Lower lobe of right lung (tissue), 2 donors: ENCODE measurements at regions of chr5 and their contacts with region 1.

Region 1: DNA sequence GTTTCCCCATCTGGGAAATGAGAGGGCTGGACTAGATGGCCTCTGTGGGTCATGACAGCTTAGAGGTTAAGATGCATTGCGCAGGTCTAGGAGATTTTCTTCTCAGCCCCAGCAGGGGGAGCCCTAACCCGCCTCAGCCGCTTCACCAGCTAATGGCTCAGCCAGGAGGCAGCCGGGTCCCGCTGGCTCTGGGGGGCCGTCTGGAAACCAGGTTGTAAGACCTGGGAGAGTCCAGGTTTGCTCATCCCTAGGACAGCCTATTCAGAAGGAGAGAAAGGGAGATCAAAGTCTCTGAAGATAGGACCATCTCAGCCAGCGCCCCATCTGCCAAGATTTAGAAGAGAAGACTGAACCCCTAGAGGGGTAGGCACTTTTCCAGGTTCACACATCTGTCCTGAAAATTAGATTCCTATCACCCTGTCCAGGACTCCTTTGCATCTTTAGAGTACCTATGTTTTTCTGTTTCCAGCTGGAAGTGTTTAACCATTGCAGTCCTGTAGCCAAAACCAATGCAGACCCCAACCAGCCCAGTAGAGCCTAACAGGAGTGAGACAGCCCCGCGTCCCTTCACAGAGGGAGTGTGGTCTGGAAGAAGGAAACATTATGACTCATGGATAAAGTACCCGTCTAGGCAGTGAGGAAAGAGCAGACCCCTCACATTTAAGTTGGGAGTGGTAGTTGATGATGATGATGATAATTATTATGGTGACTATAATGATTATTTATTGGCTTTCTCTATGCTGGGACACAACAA is 27.5 kb downstream of the SPARC start:
- DNase-seq: peak; percentile 80
- ATAC-seq: peak; percentile 93
- H3K4me3 ChIP-seq: no peak overlapping the region
- H3K27ac ChIP-seq: peak overlapping the region; percentile 21
- H3K4me1 ChIP-seq: peaks cover 26% of the 10 kb centered on the region
- H3K27me3 ChIP-seq: no peaks in the 10 kb centered on the region
- CTCF ChIP-seq: peak; percentile 91

Region 2: DNA sequence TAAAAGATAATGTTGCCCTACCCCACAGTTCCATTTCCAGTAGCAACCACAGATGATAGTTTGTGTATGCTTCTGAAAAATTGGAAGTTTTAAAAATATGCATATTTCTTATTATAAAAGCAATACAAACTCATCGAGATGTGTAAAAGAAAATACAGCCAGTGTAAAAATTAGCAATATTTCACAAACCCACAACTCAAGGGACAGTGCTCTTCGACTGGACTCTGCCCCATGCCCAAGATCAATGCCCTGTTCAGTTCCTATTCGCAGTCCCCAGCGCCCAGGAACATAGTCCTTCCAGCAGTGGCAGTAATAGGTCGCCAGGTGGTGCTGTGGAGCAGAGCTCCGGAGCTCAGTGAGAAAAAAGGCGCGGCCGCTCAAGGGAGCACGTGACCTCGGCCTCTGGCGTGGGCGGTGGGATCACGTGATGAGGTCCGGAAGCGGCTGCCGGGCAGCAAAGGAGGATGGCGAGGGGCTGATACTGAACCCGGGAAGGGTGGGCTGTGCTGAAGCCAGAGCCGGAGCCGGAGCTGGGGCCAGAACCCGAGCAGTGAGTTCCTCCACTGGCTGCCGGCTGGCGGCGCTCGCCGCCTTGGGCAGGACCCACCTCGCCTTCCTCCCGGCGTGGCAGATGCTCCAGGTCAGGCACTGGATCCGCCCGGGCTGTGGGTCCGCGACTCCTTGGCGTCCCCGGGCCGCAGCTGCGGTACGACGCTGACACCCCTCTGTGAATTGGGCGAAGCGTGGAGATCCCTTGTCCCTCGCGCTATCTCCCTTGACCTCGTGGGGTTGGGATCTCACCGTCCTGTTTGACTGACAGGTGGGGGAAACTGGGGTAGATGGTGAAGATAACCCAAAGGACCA is 211.8 kb before region 1 on chr5 and contains the start of gene SLC36A1:
- intact Hi-C with region 1: loop called (anchors 10 kb)
- DNase-seq: peak; percentile 97
- ATAC-seq: peak; percentile 98 to 100
- H3K4me3 ChIP-seq: peak within 1 kb of the TSS; percentile 88
- H3K27ac ChIP-seq: peak within 1 kb of the TSS; percentile 70
- H3K4me1 ChIP-seq: peaks cover 21% of the 10 kb centered on the region
- H3K27me3 ChIP-seq: no peaks in the 10 kb centered on the region
- CTCF ChIP-seq: peak; percentile 97
- total RNA-seq, gene SLC36A1: 11.5 TPM

Region 3: DNA sequence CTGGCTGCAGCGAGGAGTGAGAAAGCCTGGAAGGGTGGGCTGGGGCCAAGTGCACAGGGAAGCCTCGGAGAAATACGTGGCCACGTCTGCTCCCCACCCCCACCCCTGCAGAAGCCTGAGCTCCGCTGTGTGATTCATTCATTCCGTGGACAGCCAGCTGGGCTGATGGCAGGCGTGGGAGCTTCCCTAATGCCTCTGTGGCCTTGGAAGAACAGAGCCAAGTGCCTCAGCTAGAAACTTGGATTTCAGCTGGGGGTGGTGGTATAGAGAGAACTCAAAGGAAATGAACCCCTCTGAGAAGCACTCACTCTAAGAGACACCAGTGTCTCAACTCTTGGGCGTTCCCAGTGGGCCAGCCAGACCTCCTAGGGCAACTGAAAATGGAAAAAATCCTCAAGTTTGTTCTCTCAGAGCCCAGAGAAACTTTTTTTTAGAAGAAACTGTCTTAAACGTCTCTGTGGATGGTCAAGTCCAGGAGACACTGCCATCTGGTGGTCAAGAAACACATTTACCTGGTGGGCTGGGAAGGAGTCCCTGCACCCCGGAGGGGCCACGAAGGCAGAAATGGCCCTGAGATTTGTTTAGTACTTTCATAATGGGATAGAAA is 81.3 kb after region 1 on chr5:
- intact Hi-C with region 1: loop called (anchors 5 kb)
- DNase-seq: no peak
- ATAC-seq: peak; percentile 73 to 81
- H3K4me3 ChIP-seq: no peak overlapping the region
- H3K27ac ChIP-seq: peak overlapping the region; percentile 67
- H3K4me1 ChIP-seq: peaks cover 24% of the 10 kb centered on the region
- H3K27me3 ChIP-seq: no peaks in the 10 kb centered on the region
- CTCF ChIP-seq: peak; percentile 93

Region 4: DNA sequence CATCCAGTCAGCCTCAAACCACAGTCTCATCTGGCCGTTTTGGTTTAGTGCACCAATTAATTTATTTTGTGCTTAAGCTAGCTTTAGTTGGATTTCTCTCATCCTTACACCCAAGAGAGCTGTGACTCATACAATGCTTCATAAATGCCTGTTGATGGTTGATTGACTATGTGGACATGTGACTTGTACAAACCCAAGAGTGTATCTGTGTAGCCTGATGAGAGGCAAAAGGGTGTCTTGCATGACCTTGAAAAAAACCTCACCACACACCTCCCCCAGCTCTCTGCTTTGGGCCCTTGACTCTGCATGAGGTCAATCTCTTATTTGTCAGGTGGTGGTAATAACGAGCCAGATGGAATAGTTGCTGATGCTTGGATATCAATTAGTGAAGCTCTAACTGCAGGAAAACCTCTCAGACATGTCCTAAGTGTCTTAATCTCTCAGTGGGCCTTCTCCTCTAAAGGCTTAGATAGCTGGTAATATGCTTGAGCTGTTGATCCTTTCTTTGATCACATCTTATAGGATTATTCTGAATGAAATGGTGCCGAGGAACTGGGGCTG is 276.0 kb after region 1 on chr5:
- intact Hi-C with region 1: no loop called
- DNase-seq: no peak
- ATAC-seq: no peak
- H3K4me3 ChIP-seq: no peak overlapping the region
- H3K27ac ChIP-seq: no peak overlapping the region
- H3K4me1 ChIP-seq: no peaks in the 10 kb centered on the region
- H3K27me3 ChIP-seq: no peaks in the 10 kb centered on the region
- CTCF ChIP-seq: no peak